GM12878 (cell line): ENCODE measurements at regions of chr2 and their contacts with region 1.

Region 1: GRCh38 chr2:230411570-230412370 is 4.2 kb upstream of the SP100 start:
- DNase-seq: no peak
- ATAC-seq: peak; percentile 77
- H3K4me3 ChIP-seq: peak overlapping the region; percentile 77
- H3K27ac ChIP-seq: peak overlapping the region; percentile 79
- H3K4me1 ChIP-seq: peaks cover 35% of the 10 kb centered on the region
- H3K27me3 ChIP-seq: no peaks in the 10 kb centered on the region
- CTCF ChIP-seq: no peak
- EP300 ChIP-seq: no peak
- POLR2A ChIP-seq: peak; percentile 84
- RAD21 ChIP-seq: no peak

Region 2: DNA sequence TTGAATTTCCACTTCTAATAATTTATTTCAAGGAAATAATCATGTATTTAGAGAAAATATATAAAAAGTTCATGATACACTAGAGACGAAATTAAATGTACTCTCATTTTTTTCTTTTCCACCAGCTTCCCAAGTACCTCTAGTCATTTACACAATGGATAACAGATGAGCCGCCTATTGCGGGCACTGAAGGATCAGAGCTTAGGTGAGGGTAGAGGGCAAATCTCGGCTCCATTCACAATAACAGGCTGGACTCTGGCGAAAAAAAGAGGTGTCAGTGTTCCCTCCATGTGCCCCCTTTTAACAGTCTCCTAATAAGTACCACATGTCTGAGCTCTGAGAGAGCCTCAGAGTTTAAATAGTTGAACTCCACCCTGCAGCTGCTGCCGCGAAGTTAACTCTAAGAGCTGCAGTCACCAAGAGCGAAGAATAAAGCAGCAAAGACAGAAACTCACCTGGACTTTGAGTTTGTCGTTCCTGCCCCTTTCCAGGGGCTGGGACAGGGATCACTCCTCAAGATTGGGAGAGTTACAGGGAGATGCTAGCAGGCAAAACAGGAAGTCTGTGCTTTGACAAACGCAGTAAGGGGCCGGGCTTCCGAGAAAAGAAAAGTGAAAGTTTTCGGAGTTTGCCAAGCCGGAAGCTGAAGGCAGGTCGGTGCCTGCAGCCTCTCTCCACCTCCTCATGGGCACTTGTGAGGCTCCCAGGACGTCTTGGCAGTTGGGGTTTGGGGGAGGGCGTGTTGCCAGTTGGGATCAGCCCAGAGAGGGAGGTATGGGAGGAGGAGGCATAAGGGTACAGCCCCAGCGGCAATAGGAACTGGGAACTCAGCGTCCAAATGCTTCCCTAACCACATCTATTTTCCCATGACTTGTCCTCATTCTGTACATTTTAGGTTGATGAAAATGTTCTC is 192.1 kb before region 1 on chr2 and contains the start of gene SP110:
- CTCF ChIA-PET with region 1: interaction called, 5 read pairs
- POLR2A ChIA-PET with region 1: interaction called, 8 read pairs
- RAD21 ChIA-PET with region 1: interaction called, 10 read pairs
- SMC1A ChIA-PET with region 1: interaction called, 5 read pairs
- in situ Hi-C with region 1: no loop called
- intact Hi-C with region 1: no loop called
- DNase-seq: peak; percentile 78
- ATAC-seq: peak; percentile 81
- H3K4me3 ChIP-seq: peak within 1 kb of the TSS; percentile 82
- H3K27ac ChIP-seq: peak within 1 kb of the TSS; percentile 95
- H3K4me1 ChIP-seq: peaks cover 37% of the 10 kb centered on the region
- H3K27me3 ChIP-seq: no peaks in the 10 kb centered on the region
- CTCF ChIP-seq: no peak
- EP300 ChIP-seq: no peak
- POLR2A ChIP-seq: peak; percentile 91
- RAD21 ChIP-seq: no peak
- polyA plus RNA-seq, gene SP110: 97.3 to 103 TPM

Region 3: DNA sequence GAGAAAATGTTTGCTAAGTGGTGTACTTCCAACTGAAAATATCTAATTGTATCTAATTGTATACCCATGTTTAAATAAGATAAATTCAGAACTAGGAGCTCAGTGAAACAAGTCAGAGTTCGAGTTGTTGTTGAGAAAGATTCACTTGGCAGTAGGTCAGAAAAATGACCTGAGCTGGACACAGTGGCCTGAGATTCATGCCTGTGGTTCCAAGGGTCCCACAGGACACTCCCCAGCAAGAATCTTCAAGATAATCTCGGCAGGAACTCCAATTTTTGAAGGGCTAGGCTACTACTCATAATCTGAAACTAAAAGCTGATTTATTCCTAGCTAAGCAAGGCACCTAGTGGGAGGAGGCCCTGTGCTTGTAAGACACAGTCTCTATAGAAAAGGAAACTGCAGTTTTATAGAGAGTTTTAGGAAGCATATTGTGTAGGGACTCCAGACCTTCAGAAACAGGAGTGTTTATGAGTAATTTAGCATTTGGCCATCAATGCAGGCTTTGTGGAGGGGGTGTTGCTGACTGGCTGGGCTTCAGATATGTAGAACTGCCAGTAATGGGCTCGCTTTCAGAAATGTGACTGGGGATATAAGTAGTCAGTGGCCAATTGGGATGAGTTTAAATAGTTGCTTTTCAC is 143.0 kb before region 1 on chr2:
- CTCF ChIA-PET with region 1: no interaction called
- POLR2A ChIA-PET with region 1: no interaction called
- RAD21 ChIA-PET with region 1: no interaction called
- SMC1A ChIA-PET with region 1: interaction called, 3 read pairs
- in situ Hi-C with region 1: no loop called
- intact Hi-C with region 1: loop called (anchors 5 kb)
- DNase-seq: peak; percentile 36
- ATAC-seq: peak; percentile 59
- H3K4me3 ChIP-seq: no peak overlapping the region
- H3K27ac ChIP-seq: peak overlapping the region; percentile 76
- H3K4me1 ChIP-seq: peaks cover 28% of the 10 kb centered on the region
- H3K27me3 ChIP-seq: no peaks in the 10 kb centered on the region
- CTCF ChIP-seq: no peak
- EP300 ChIP-seq: no peak
- POLR2A ChIP-seq: no peak
- RAD21 ChIP-seq: no peak

Region 4: DNA sequence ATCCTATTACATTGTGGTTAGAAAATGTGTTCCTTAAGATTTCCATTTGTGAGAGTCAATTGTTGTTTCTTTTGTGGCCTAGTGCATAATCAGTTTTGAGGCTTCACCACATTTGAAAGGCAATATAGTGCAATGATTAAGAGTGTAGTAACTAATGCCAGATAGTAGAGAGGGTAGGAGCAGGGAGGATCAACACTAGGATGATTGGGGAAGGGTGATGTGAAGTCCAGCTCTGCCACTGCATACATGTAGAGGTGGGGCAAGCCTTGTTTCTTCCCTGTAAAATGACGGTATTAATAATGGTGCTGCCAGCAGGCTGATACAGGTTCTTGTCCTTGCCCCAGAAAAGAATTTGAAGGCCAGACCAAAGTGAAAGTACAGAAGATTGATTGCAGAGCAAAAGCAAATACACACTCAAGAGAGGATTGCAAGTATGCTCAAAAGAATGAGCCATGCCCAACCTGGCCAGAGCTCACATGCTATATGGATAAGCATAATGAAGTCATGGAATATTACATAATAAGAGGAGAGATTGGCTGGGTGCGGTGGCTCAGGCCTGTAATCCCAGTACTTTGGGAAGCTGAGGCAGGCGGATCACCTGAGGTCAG is 12.2 kb after region 1 on chr2:
- CTCF ChIA-PET with region 1: no interaction called
- POLR2A ChIA-PET with region 1: interaction called, 3 read pairs
- RAD21 ChIA-PET with region 1: interaction called, 10 read pairs
- SMC1A ChIA-PET with region 1: interaction called, 19 read pairs
- in situ Hi-C with region 1: no loop called
- intact Hi-C with region 1: no loop called
- DNase-seq: no peak
- ATAC-seq: peak; percentile 43
- H3K4me3 ChIP-seq: peak overlapping the region; percentile 52; the same call in 1 of the 2 replicates
- H3K27ac ChIP-seq: no peak overlapping the region
- H3K4me1 ChIP-seq: peaks cover 4% of the 10 kb centered on the region; the same call in 1 of the 2 replicates
- H3K27me3 ChIP-seq: no peaks in the 10 kb centered on the region
- CTCF ChIP-seq: no peak
- EP300 ChIP-seq: no peak
- POLR2A ChIP-seq: no peak
- RAD21 ChIP-seq: no peak

Region 5: DNA sequence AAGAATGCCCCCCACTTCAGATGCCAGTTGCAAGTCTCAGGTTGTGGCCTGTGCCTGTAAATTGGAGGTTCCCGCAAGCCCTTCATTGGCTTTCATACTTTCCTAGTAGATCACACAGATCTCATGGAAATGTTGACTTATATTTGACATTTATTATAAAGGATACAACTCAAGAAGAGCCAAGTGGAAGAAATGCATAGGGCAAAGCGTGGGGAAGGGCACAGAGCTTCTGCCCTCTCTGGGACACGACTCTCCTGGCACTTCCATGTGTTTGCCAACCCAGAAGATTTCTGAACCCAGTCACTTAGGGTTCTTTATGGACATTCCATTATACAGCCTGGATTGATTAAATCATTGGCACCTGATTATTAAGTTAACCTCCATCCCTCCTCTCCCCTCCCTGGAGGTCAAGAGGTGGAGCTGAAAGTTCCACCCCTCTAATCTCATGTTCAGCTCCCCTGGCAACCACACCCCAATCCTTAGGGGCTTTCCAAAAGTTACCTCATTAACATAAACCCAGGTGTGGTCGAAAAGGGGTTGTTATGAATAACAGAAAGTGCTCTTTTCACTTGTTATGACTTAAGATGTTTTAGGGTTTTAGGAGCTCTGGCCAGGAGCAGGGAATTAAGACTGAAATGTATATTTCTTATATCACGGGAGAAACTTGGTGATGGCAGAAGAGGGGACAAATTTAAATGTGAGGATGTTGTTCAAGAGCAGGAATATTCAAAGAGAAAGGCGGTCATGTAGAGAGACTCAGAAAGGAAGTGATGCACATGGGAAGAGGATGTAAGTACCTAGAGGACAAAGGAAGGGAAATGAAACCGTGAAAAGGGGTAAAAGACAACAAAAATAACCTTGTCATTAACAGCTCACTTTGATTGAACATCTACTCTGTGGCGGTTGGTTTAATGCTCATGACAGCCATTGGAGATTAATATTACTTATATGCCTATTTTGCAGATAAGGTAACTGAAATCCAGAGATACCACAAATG is 36.0 kb after region 1 on chr2:
- CTCF ChIA-PET with region 1: no interaction called
- POLR2A ChIA-PET with region 1: interaction called, 21 read pairs
- RAD21 ChIA-PET with region 1: interaction called, 22 read pairs
- SMC1A ChIA-PET with region 1: interaction called, 45 read pairs
- in situ Hi-C with region 1: no loop called
- intact Hi-C with region 1: loop called (anchors 2 kb)
- DNase-seq: peak; percentile 84
- ATAC-seq: peak; percentile 87
- H3K4me3 ChIP-seq: 0 out of 2 replicates have a peak overlapping the region, but pooled peaks have one; percentile 13
- H3K27ac ChIP-seq: peak overlapping the region; percentile 89
- H3K4me1 ChIP-seq: peaks cover 53% of the 10 kb centered on the region
- H3K27me3 ChIP-seq: no peaks in the 10 kb centered on the region
- CTCF ChIP-seq: no peak
- EP300 ChIP-seq: peak; percentile 80 to 84; a peak in 3 of 4 replicates
- POLR2A ChIP-seq: no peak
- RAD21 ChIP-seq: no peak

Region 6: DNA sequence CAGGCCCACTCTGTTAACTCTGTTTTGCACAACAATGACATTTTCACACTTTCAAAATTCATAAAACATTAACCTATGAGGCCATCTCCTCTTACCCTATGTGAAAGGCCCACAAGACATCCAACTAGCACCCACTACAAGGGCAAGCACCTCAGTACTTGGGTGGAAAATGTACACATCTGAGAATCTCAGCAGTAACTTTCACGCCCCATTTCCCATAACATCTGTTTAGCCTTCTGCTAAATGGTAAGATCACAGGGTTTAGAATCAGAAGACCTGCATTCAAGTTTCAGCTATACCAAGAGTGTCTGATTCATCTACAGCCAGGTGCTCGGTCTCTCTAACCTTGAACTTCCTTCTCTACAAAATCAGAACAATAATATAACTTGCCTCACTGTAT is 93.4 kb after region 1 on chr2:
- CTCF ChIA-PET with region 1: no interaction called
- POLR2A ChIA-PET with region 1: no interaction called
- RAD21 ChIA-PET with region 1: no interaction called
- SMC1A ChIA-PET with region 1: no interaction called
- in situ Hi-C with region 1: no loop called
- intact Hi-C with region 1: no loop called
- DNase-seq: peak; percentile 70
- ATAC-seq: peak; percentile 89
- H3K4me3 ChIP-seq: no peak overlapping the region
- H3K27ac ChIP-seq: peak overlapping the region; percentile 3; the same call in 1 of the 2 replicates
- H3K4me1 ChIP-seq: peaks cover 6% of the 10 kb centered on the region; the same call in 1 of the 2 replicates
- H3K27me3 ChIP-seq: no peaks in the 10 kb centered on the region
- CTCF ChIP-seq: no peak
- EP300 ChIP-seq: no peak
- POLR2A ChIP-seq: no peak
- RAD21 ChIP-seq: 0 out of 2 replicates have a peak, but pooled peaks have one; percentile 1